AG04449 (cell line): ENCODE measurements at regions of chr16 and their contacts with region 1.

Region 1: DNA sequence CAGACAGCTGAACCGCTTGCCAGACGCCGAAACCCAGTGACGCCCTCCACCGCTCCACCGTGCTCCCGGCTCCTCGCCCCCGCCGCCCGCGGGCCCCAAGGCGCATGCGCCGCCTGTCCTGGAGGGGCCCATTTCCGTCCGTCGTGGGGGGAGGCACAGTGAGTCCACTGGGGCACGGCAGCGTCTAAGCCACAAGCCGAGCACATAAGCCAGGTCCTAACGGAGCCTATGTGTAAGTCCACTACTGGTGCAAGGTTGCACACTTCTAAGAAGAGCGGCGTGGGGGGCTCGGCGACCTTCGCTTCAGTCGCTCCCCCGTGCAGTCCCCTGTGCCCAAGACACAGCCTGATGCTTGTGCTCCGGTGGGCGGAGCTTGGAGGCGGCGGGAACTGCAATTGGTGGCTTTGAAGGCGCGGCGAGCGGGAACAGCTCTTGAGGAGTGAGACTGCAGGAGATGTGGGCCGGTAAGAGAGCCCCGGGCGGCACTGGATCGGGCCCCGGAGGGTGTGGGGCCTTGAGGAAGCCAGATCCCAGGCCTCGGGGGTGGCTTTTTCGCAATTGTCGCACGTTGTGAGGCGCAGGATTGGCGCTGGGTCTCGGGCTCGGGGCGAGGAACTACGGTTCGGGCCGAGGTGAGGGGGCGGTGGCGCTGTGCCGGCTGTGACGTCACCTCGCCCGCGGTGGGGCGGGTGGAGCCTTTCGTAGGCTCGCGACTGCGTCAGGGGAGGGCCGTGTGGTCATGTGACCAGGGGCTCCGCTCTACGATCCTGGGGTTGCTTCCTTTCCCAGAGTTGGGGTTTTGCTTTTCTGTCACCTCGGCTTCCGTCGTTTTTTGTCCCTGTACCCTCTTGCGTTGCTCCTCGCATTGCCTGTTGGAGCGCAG is at the starts of genes CENPN and CMC2:
- DNase-seq: peak; percentile 96
- H3K4me3 ChIP-seq: peak within 1 kb of the TSS; percentile 98
- CTCF ChIP-seq: peak; percentile 4

Region 2: DNA sequence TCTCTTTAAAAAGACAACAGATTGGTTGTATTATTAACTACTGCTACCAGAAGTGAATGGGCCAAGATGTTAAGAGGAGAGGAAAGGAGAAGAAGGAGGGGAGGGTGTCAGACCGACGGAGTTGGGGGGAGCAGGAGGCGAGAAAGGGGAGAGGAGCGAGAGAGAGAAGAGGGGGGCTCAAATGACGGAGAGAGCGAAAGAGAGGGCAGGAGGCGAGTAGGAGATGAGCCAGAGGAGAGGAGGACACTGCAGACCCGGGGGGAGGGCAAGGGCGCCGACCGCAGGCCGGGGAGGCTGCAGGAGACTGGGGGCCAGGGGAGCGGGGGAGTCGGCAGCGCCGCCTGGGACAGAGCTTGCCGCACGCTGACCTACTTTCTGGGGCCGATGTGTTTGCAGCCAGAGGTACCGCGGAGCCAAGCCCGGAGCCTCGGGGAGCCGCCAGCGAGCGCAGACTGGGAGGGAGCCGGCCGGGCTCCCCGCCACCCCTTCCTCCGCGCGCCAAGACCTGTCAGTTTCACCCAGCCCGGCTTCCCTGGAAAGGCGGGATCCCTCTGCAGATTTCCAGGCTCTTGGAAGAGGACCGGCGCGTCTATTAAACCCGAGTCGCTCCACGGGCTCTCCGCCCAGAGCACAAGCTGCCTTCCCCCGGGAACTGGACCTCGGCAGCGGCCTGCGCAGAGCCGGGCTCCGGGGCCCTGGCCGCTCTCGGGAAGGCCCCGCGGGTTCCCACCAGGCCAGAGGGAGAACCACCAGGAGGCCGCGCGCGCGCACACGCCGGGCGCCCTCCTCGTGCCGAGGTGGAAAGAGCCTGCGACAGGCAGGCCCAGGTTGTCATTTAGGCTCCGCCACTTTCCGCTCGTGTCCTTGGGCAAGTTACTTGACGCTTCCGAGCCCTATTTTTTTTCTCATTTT is 75.0 kb before region 1 on chr16:
- CTCF ChIA-PET with region 1: interaction called, 14 read pairs
- POLR2A ChIA-PET with region 1: interaction called, 3 read pairs
- DNase-seq: no peak
- H3K4me3 ChIP-seq: peak overlapping the region; percentile 59
- CTCF ChIP-seq: peak; percentile 25

Region 3: DNA sequence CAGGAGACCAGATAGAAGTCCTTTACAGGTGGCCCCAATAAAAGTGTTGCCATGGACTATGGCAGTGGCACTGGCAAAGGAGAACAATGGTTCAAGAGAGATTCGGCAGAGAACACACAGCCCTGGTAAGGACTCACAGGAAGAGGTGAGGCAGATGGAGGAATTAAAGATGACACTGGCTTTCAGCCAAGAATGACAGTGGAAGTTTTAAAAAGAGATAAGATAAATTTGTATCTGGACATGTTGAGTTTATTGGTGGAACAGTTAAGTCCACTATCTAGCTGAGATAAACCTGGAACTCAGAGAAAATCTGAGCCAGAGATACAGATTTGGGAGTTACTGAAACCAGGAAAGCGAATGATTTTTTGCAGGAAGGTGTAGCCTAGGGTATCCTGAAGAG is 20.5 kb before region 1 on chr16:
- CTCF ChIA-PET with region 1: interaction called, 125 read pairs
- POLR2A ChIA-PET with region 1: interaction called, 3 read pairs
- DNase-seq: no peak
- H3K4me3 ChIP-seq: no peak overlapping the region
- CTCF ChIP-seq: no peak

Region 4: GRCh38 chr16:81018496-81018895 is 11.4 kb after region 1 on chr16:
- CTCF ChIA-PET with region 1: interaction called, 29 read pairs
- POLR2A ChIA-PET with region 1: interaction called, 3 read pairs
- DNase-seq: no peak
- H3K4me3 ChIP-seq: no peak overlapping the region
- CTCF ChIP-seq: no peak